Naive thymus-derived CD4-positive, alpha-beta T cell (primary cell): ENCODE measurements at regions of chr12 and their contacts with region 1.

Region 1: GRCh38 chr12:42372154-42372791 is 46.3 kb downstream of the PPHLN1 start:
- DNase-seq: peak in 7 of 9 donors; percentile 26 to 61 (median 49)
- ATAC-seq: peak; percentile 93
- H3K4me3 ChIP-seq: no peak overlapping the region
- H3K4me3 Mint-ChIP-seq: no peak overlapping the region
- H3K27ac ChIP-seq: no peak overlapping the region
- H3K27ac Mint-ChIP-seq: no peak overlapping the region
- H3K4me1 ChIP-seq: no peaks in the 10 kb centered on the region
- H3K4me1 Mint-ChIP-seq: peaks cover 4 to 32% (median 15%) of the 10 kb centered on the region in 7 donors
- H3K27me3 ChIP-seq: no peaks in the 10 kb centered on the region
- H3K27me3 Mint-ChIP-seq: no peaks in the 10 kb centered on the region

Region 2: DNA sequence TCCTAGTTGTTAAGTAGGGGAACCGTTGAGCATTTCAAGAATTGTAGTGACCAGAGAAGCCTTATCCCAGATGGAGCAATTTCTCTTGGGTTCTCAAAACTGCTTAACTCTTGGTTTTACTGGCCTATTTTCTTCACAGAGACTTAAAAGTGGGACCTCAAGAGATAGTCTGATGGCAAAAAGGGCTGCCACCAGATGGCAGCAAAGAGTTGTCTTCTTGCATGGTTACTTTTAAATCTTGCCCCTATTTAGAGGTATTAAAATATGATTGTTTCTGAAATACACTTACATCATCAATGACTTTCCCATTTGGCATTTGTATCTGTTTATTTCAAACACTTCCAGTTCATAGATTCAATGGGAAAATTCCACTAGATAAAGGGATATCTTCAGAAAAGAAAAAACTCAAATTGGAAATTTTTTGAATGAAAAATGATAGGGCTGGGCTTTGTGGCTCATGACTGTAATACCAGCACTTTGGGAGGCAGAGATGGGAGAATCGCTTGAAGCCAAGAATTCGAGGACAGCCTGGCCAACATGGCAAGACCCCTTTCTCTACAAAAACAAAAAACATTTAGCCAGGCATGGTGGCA is 1749.9 kb before region 1 on chr12:
- CTCF ChIA-PET with region 1: no interaction called
- POLR2A ChIA-PET with region 1: no interaction called
- intact Hi-C with region 1: loop called in 1 of 2 experiments (anchors 10 kb)
- DNase-seq: peak in 1 of 9 donors; percentile 19
- ATAC-seq: no peak
- H3K4me3 ChIP-seq: no peak overlapping the region
- H3K4me3 Mint-ChIP-seq: no peak overlapping the region
- H3K27ac ChIP-seq: no peak overlapping the region
- H3K27ac Mint-ChIP-seq: no peak overlapping the region
- H3K4me1 ChIP-seq: no peaks in the 10 kb centered on the region
- H3K4me1 Mint-ChIP-seq: no peaks in the 10 kb centered on the region
- H3K27me3 ChIP-seq: no peaks in the 10 kb centered on the region
- H3K27me3 Mint-ChIP-seq: peaks cover 0 to 7% (median 0%) of the 10 kb centered on the region in 5 donors

Region 3: DNA sequence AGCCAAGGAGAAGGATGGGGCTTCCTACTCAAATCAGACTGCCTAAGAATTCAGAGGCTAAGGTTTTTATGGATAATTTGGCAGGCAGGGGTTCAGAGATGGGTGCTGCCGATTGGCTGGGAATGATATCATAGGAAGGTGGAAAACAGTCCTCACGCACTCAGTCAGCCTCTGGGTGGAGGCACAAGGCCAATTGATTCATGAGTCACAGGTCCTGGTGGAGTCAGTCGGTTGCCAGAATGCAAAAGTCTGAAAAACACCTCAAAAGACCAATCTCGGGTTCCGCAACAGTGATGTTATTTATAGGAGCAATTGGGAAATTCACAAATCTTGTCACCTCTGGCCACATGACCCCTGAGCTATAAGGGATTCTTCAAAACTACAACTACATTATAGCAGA is 333.1 kb before region 1 on chr12:
- CTCF ChIA-PET with region 1: no interaction called
- POLR2A ChIA-PET with region 1: no interaction called
- intact Hi-C with region 1: no loop called
- DNase-seq: no peak
- ATAC-seq: no peak
- H3K4me3 ChIP-seq: no peak overlapping the region
- H3K4me3 Mint-ChIP-seq: no peak overlapping the region
- H3K27ac ChIP-seq: no peak overlapping the region
- H3K27ac Mint-ChIP-seq: no peak overlapping the region
- H3K4me1 ChIP-seq: no peaks in the 10 kb centered on the region
- H3K4me1 Mint-ChIP-seq: no peaks in the 10 kb centered on the region
- H3K27me3 ChIP-seq: no peaks in the 10 kb centered on the region
- H3K27me3 Mint-ChIP-seq: peaks cover 10 to 16% (median 13%) of the 10 kb centered on the region in 5 donors

Region 4: GRCh38 chr12:42129595-42130204 is 242.6 kb before region 1 on chr12:
- CTCF ChIA-PET with region 1: interaction called, 10 read pairs
- POLR2A ChIA-PET with region 1: no interaction called
- intact Hi-C with region 1: loop called (anchors 1 kb)
- DNase-seq: peak in 6 of 9 donors; percentile 23 to 44 (median 30)
- ATAC-seq: peak; percentile 61
- H3K4me3 ChIP-seq: no peak overlapping the region
- H3K4me3 Mint-ChIP-seq: no peak overlapping the region
- H3K27ac ChIP-seq: no peak overlapping the region
- H3K27ac Mint-ChIP-seq: peak overlapping the region in 1 of 9 donors; percentile 29
- H3K4me1 ChIP-seq: no peaks in the 10 kb centered on the region
- H3K4me1 Mint-ChIP-seq: peaks cover 9 to 57% (median 36%) of the 10 kb centered on the region in 7 donors
- H3K27me3 ChIP-seq: no peaks in the 10 kb centered on the region
- H3K27me3 Mint-ChIP-seq: no peaks in the 10 kb centered on the region

Region 5: DNA sequence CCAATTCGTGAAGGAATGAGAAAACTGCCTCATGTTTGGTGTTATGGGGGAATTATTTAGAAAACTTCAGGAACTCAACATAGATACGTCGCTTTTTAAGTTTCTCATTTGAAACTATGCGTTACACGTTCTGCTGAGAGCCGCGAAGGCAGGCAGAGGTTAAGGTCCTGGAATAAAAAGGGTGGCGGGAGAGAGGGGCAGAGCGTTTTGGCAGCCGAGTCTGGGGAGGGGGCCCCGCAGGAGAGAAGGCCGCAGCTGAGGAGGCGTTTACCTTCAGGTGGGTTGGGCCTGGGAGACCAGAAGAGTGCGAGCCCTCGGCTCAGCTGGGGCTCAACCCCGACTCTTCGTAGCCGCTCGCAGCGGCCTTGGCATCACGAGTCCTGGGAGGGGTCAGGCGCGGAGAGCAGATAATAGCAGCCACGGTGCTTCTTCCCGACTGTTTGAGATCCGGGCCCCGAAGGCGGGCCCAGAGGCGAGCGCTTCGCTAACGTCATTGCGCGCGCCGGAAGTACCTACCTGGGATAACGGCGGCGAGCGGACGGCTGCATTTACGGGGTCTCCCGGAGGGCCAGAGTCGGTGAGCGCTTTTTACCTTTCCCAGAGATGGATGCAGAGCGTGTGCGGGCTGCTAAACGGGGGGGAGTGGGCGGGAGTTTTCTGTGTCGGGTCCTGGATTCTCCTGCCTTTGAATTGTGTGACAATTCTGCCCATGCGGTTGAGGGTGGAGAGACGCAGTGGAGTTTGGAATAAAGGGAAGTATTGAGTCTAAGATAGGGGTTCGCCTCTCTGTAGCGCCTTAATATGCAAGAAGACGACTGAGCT is 46.4 kb before region 1 on chr12 and contains the starts of genes PPHLN1 and ZCRB1:
- CTCF ChIA-PET with region 1: no interaction called
- POLR2A ChIA-PET with region 1: no interaction called
- intact Hi-C with region 1: loop called in 1 of 2 experiments (anchors 1 kb)
- DNase-seq: peak; percentile 61 to 79 (median 74)
- ATAC-seq: peak; percentile 94
- H3K4me3 ChIP-seq: peak within 1 kb of the TSS; percentile 69
- H3K4me3 Mint-ChIP-seq: peak within 1 kb of the TSS; percentile 92 to 100 (median 98)
- H3K27ac ChIP-seq: peak within 1 kb of the TSS; percentile 80
- H3K27ac Mint-ChIP-seq: peak within 1 kb of the TSS; percentile 93 to 99 (median 97)
- H3K4me1 ChIP-seq: peaks cover 15 to 20% of the 10 kb centered on the region in 2 donors
- H3K4me1 Mint-ChIP-seq: peaks cover 33 to 57% (median 50%) of the 10 kb centered on the region in 7 donors
- H3K27me3 ChIP-seq: no peaks in the 10 kb centered on the region
- H3K27me3 Mint-ChIP-seq: no peaks in the 10 kb centered on the region
- total RNA-seq, gene PPHLN1: 89.1 to 97.6 (median 90.2) TPM
- total RNA-seq, gene ZCRB1: 20.3 to 47.5 (median 23.8) TPM

Region 6: DNA sequence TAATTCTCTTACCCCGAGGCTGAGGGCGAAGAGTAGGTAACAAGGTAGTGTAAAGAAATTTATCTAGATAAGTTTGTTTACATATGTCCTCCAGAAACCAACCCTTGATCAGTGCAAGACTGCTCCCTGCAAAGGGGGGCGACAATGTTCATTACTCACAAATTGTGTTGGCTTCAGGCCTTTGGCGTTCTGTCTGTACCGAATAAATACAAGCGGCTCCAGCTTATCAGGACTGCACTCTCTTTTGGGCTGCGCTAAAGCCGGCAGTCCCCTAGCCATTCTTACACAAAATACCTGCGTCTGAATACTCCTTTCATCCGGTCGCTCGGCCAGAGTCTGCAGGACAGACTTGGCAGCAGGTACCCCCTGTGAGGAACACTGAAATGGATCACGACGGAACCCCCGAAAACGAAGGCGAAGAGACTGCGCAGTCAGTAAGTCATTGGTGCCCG is 70.1 kb after region 1 on chr12:
- CTCF ChIA-PET with region 1: no interaction called
- POLR2A ChIA-PET with region 1: no interaction called
- intact Hi-C with region 1: no loop called
- DNase-seq: no peak
- ATAC-seq: no peak
- H3K4me3 ChIP-seq: no peak overlapping the region
- H3K4me3 Mint-ChIP-seq: no peak overlapping the region
- H3K27ac ChIP-seq: no peak overlapping the region
- H3K27ac Mint-ChIP-seq: no peak overlapping the region
- H3K4me1 ChIP-seq: no peaks in the 10 kb centered on the region
- H3K4me1 Mint-ChIP-seq: peaks cover 0 to 6% (median 0%) of the 10 kb centered on the region in 7 donors
- H3K27me3 ChIP-seq: no peaks in the 10 kb centered on the region
- H3K27me3 Mint-ChIP-seq: no peaks in the 10 kb centered on the region

Region 7: GRCh38 chr12:42552822-42553221 is 180.5 kb after region 1 on chr12:
- CTCF ChIA-PET with region 1: no interaction called
- POLR2A ChIA-PET with region 1: no interaction called
- intact Hi-C with region 1: no loop called
- DNase-seq: no peak
- ATAC-seq: no peak
- H3K4me3 ChIP-seq: no peak overlapping the region
- H3K4me3 Mint-ChIP-seq: no peak overlapping the region
- H3K27ac ChIP-seq: no peak overlapping the region
- H3K27ac Mint-ChIP-seq: no peak overlapping the region
- H3K4me1 ChIP-seq: no peaks in the 10 kb centered on the region
- H3K4me1 Mint-ChIP-seq: no peaks in the 10 kb centered on the region
- H3K27me3 ChIP-seq: no peaks in the 10 kb centered on the region
- H3K27me3 Mint-ChIP-seq: peaks cover 4 to 35% (median 14%) of the 10 kb centered on the region in 5 donors